B cell (primary cell): ENCODE measurements at regions of chr4 and their contacts with region 1.

Region 1: GRCh38 chr4:2402029-2402428 is 16.4 kb downstream of the ZFYVE28 start:
- DNase-seq: no peak
- ATAC-seq: peak; percentile 49
- H3K4me3 ChIP-seq: peak overlapping the region in 2 of 5 experiments; percentile 7 to 24
- H3K4me3 Mint-ChIP-seq: peak overlapping the region; percentile 67
- H3K27ac ChIP-seq: no peak overlapping the region
- H3K27ac Mint-ChIP-seq: no peak overlapping the region
- H3K4me1 ChIP-seq: peaks cover 7 to 11% of the 10 kb centered on the region in 2 donors
- H3K4me1 Mint-ChIP-seq: peaks cover 13% of the 10 kb centered on the region
- H3K27me3 ChIP-seq: peaks cover 0 to 34% (median 9%) of the 10 kb centered on the region in 4 experiments
- H3K27me3 Mint-ChIP-seq: peaks cover 32% of the 10 kb centered on the region
- CTCF ChIP-seq: no peak

Region 2: GRCh38 chr4:2249526-2250356 is 152.3 kb before region 1 on chr4:
- CTCF ChIA-PET with region 1: no interaction called
- POLR2A ChIA-PET with region 1: interaction called, 14 read pairs
- intact Hi-C with region 1: no loop called
- DNase-seq: peak; percentile 8
- ATAC-seq: no peak
- H3K4me3 ChIP-seq: no peak overlapping the region
- H3K4me3 Mint-ChIP-seq: no peak overlapping the region
- H3K27ac ChIP-seq: no peak overlapping the region
- H3K27ac Mint-ChIP-seq: no peak overlapping the region
- H3K4me1 ChIP-seq: no peaks in the 10 kb centered on the region
- H3K4me1 Mint-ChIP-seq: no peaks in the 10 kb centered on the region
- H3K27me3 ChIP-seq: no peaks in the 10 kb centered on the region
- H3K27me3 Mint-ChIP-seq: no peaks in the 10 kb centered on the region
- CTCF ChIP-seq: no peak